Left ventricle myocardium inferior (tissue), 1 donor: ENCODE measurements at regions of chr12 and their contacts with region 1.

Region 1: GRCh38 chr12:9049520-9050133 is 60.3 kb downstream of the KLRG1 start:
- DNase-seq: no peak
- H3K4me3 ChIP-seq: no peak overlapping the region
- H3K27ac ChIP-seq: no peak overlapping the region
- H3K4me1 ChIP-seq: peaks cover 3% of the 10 kb centered on the region
- H3K27me3 ChIP-seq: no peaks in the 10 kb centered on the region
- CTCF ChIP-seq: peak; percentile 64

Region 2: GRCh38 chr12:8687846-8688601 is 361.6 kb before region 1 on chr12:
- intact Hi-C with region 1: loop called (anchors 10 kb)
- DNase-seq: no peak
- H3K4me3 ChIP-seq: no peak overlapping the region
- H3K27ac ChIP-seq: peak overlapping the region; percentile 3
- H3K4me1 ChIP-seq: peaks cover 24% of the 10 kb centered on the region
- H3K27me3 ChIP-seq: no peaks in the 10 kb centered on the region
- CTCF ChIP-seq: no peak

Region 3: GRCh38 chr12:8914716-8915526 is 134.7 kb before region 1 on chr12:
- intact Hi-C with region 1: loop called (anchors 10 kb)
- DNase-seq: peak; percentile 40
- H3K4me3 ChIP-seq: peak overlapping the region; percentile 80
- H3K27ac ChIP-seq: peak overlapping the region; percentile 88
- H3K4me1 ChIP-seq: peaks cover 49% of the 10 kb centered on the region
- H3K27me3 ChIP-seq: no peaks in the 10 kb centered on the region
- CTCF ChIP-seq: no peak